ENCODE measurements at regions of chr12 and their contacts with region 1.

Region 1: DNA sequence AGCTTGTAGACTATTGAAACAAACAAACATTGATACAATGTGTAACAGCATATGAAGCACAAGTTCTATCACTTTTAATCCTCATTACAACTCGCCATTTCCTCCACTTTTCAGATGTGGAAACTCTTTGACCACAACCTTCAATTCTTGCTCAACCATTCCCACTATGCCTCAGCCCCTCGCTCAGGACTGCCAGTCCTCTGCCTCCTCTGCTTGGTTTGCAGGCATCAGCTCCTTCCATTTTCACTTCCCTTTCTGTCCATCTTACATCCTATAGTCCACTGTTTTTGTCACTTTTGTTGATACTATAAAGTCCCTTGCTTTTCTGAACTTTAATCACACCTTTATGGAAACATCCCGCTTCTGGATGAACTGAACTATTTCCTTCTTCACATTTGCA is 28.2 kb upstream of the CD27 start:
- DNase-seq: no peak
- H3K4me3 ChIP-seq: no peak overlapping the region
- H3K27ac ChIP-seq: no peak overlapping the region
- H3K4me1 ChIP-seq: no peaks in the 10 kb centered on the region
- H3K27me3 ChIP-seq: no peaks in the 10 kb centered on the region
- CTCF ChIP-seq: no peak

Region 2: GRCh38 chr12:6500466-6500865 is 83.9 kb after region 1 on chr12:
- CTCF ChIA-PET with region 1: no interaction called
- dilution Hi-C with region 1: loop called (anchors 5 kb)
- in situ Hi-C with region 1: no loop called
- intact Hi-C with region 1: no loop called
- DNase-seq: no peak
- H3K4me3 ChIP-seq: no peak overlapping the region
- H3K27ac ChIP-seq: no peak overlapping the region
- H3K4me1 ChIP-seq: peaks cover 10% of the 10 kb centered on the region
- H3K27me3 ChIP-seq: no peaks in the 10 kb centered on the region
- CTCF ChIP-seq: no peak

Measured in mammary epithelial cell (primary cell).